Activated B cell treated with CpG ODN at 0.5 μM for 24 hours (primary cell): ENCODE measurements at regions of chr14 and their contacts with region 1.

Region 1: GRCh38 chr14:53432378-53432802 is 279.3 kb upstream of the DDHD1 start:
- DNase-seq: no peak
- ATAC-seq: peak; percentile 50
- H3K4me3 Mint-ChIP-seq: no peak overlapping the region
- H3K27ac Mint-ChIP-seq: no peak overlapping the region
- H3K4me1 Mint-ChIP-seq: no peaks in the 10 kb centered on the region
- H3K27me3 Mint-ChIP-seq: no peaks in the 10 kb centered on the region
- CTCF ChIP-seq: no peak

Region 2: GRCh38 chr14:54147282-54147681 is 714.9 kb after region 1 on chr14:
- CTCF ChIA-PET with region 1: no interaction called
- POLR2A ChIA-PET with region 1: no interaction called
- intact Hi-C with region 1: no loop called
- DNase-seq: no peak
- ATAC-seq: no peak
- H3K4me3 Mint-ChIP-seq: no peak overlapping the region
- H3K27ac Mint-ChIP-seq: no peak overlapping the region
- H3K4me1 Mint-ChIP-seq: no peaks in the 10 kb centered on the region
- H3K27me3 Mint-ChIP-seq: no peaks in the 10 kb centered on the region
- CTCF ChIP-seq: no peak

Region 3: GRCh38 chr14:54329082-54329695 is 896.8 kb after region 1 on chr14:
- CTCF ChIA-PET with region 1: no interaction called
- POLR2A ChIA-PET with region 1: no interaction called
- intact Hi-C with region 1: loop called (anchors 1 kb)
- DNase-seq: no peak
- ATAC-seq: peak; percentile 52
- H3K4me3 Mint-ChIP-seq: no peak overlapping the region
- H3K27ac Mint-ChIP-seq: no peak overlapping the region
- H3K4me1 Mint-ChIP-seq: no peaks in the 10 kb centered on the region
- H3K27me3 Mint-ChIP-seq: peaks cover 15% of the 10 kb centered on the region
- CTCF ChIP-seq: no peak

Region 4: GRCh38 chr14:54347997-54348611 is 915.7 kb after region 1 on chr14:
- CTCF ChIA-PET with region 1: interaction called, 5 read pairs
- POLR2A ChIA-PET with region 1: no interaction called
- intact Hi-C with region 1: loop called (anchors 1 kb)
- DNase-seq: no peak
- ATAC-seq: peak; percentile 21
- H3K4me3 Mint-ChIP-seq: no peak overlapping the region
- H3K27ac Mint-ChIP-seq: no peak overlapping the region
- H3K4me1 Mint-ChIP-seq: peaks cover 5% of the 10 kb centered on the region
- H3K27me3 Mint-ChIP-seq: peaks cover 4% of the 10 kb centered on the region
- CTCF ChIP-seq: no peak